Heart right ventricle (tissue), 16 donors: ENCODE measurements at regions of chr10 and their contacts with region 1.

Region 1: GRCh38 chr10:130463104-130463875 is 327.1 kb downstream of the GLRX3 start:
- DNase-seq: no peak
- ATAC-seq: no peak
- H3K4me3 ChIP-seq: no peak overlapping the region
- H3K27ac ChIP-seq: no peak overlapping the region
- H3K4me1 ChIP-seq: no peaks in the 10 kb centered on the region
- H3K27me3 ChIP-seq: peaks cover 0 to 8% (median 0%) of the 10 kb centered on the region in 7 donors
- CTCF ChIP-seq: no peak

Region 2: DNA sequence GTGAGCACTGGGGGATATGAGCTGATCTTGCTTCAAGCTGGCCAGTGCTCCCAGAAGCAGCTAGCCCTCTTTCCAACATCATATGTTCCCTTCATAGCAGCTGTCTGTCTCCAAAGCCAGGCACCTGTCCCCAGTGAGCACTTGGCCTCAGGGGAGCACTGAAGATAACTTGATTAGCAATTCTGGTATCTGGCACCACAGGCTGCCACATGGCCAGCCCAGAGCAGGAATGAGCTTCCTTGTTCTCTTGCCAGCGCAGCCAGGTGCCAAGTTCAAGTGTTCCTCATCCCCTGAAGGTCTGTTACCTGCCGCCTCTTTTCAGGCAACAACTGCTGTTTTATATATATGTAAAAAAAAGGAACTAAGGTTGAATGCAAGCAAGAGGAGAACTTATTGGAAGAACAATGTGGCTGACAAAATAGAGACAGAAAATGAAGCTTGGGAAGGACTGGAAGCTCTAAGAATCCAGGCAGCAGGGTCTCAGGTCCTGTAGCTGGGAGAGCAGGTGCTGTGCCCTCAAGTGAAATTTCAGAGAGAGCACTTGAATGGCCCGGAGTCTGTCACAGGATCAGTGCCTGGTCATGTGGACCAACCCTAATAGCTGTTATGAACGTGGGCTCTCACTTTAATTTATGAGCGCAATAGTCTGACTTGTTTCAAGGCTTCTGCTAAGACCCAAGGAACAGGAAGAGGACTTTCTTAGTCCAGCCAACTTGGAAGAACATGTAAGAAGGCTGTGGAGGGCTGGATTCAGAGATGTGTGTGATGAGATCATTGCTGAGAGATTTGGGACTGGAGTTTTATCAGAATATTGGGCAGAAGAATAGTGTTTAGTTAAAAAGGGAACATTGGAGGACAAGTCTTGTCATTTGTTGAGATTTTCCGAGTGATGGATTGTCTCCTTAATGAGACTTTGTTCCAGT is 59.9 kb before region 1 on chr10:
- intact Hi-C with region 1: loop called in 1 of 10 experiments (anchors 10 kb)
- DNase-seq: no peak
- ATAC-seq: no peak
- H3K4me3 ChIP-seq: no peak overlapping the region
- H3K27ac ChIP-seq: no peak overlapping the region
- H3K4me1 ChIP-seq: no peaks in the 10 kb centered on the region
- H3K27me3 ChIP-seq: peaks cover 0 to 24% (median 9%) of the 10 kb centered on the region in 7 donors
- CTCF ChIP-seq: no peak

Region 3: DNA sequence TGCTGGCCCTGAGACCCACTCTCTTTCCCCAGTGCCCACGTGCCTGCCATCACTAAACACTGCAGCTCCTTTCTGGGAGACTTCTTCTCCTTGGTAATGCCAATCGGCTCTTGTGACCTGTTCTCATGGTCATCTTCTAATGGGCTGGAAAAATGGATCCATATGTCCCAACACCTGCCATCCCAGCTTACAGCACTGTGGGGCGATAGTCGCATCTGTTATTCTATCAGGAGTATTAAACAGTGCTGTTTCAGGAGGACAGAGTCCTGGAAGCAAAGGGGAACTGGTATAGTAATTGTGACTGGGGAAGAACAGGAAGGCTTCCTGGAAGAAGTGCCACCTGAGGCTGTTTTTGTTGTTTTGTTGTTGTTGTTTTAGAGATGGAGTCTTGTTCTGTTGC is 84.1 kb after region 1 on chr10:
- intact Hi-C with region 1: no loop called
- DNase-seq: no peak
- ATAC-seq: no peak
- H3K4me3 ChIP-seq: no peak overlapping the region
- H3K27ac ChIP-seq: no peak overlapping the region
- H3K4me1 ChIP-seq: no peaks in the 10 kb centered on the region
- H3K27me3 ChIP-seq: peaks cover 0 to 72% (median 47%) of the 10 kb centered on the region in 7 donors
- CTCF ChIP-seq: no peak

Region 4: DNA sequence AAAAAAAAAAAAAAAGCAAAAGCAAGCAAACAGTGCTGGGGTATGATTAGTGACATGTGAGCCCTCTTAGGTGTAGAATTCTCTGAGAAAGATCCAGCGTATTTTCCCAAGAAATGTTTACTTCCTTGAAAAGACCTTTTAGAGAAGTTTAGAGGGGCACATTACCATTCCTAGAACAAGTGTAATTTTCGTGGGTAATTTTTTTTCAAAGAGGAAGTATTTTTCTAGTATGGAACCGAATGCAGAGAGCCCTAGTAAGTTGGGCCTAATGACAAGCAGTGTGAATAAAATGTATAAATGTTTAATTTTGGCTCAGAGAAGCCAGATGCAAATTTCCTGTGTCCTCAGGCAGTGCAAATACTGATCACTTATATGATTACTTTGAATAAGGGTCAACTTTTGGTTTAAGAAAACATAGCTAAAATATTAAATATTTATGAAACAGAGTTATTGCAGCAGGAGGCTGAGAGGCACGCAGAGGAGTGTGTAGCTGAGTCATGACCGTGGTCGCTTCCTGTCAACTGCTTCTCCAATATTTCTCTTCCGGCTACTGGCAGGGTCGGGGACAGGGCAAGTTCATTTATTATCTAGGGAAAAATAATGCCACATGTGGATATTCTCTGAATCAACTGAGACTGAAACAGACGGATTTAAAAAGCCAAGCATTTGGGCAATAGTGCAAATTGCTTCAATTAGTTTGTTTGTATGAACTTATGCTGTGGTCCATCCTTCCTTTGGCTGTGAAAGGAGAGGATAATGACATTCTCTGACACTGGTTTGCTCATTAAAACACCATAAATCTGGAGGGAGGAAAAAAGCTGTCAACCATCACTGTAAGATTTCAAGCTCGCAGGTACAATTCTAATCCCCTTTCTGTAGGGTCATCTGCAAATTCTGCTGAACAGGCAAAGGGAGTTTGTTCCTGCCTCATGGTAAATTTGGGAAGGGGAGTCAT is 168.1 kb after region 1 on chr10:
- intact Hi-C with region 1: no loop called
- DNase-seq: no peak
- ATAC-seq: peak in 2 of 8 donors; percentile 44 to 55
- H3K4me3 ChIP-seq: no peak overlapping the region
- H3K27ac ChIP-seq: peak overlapping the region in 1 of 10 donors; percentile 74
- H3K4me1 ChIP-seq: peaks cover 0 to 22% (median 0%) of the 10 kb centered on the region in 9 donors
- H3K27me3 ChIP-seq: peaks cover 0 to 32% (median 16%) of the 10 kb centered on the region in 7 donors
- CTCF ChIP-seq: no peak